Activated B cell treated with CpG ODN at 0.5 μM for 24 hours (primary cell): ENCODE measurements at regions of chr16 and their contacts with region 1.

Region 1: GRCh38 chr16:58129097-58129936 is at the start of gene CFAP20:
- DNase-seq: peak; percentile 90
- ATAC-seq: peak; percentile 91
- H3K4me3 Mint-ChIP-seq: peak within 1 kb of the TSS; percentile 89
- H3K27ac Mint-ChIP-seq: peak within 1 kb of the TSS; percentile 85
- H3K4me1 Mint-ChIP-seq: peaks cover 48% of the 10 kb centered on the region
- H3K27me3 Mint-ChIP-seq: no peaks in the 10 kb centered on the region
- CTCF ChIP-seq: no peak
- total RNA-seq, gene CFAP20: 20.2 and 24.9 TPM in 2 replicates

Region 2: GRCh38 chr16:57984331-57985203 is 144.8 kb before region 1 on chr16:
- CTCF ChIA-PET with region 1: no interaction called
- POLR2A ChIA-PET with region 1: interaction called, 12 read pairs
- intact Hi-C with region 1: loop called (anchors 1 kb)
- DNase-seq: peak; percentile 82
- ATAC-seq: peak; percentile 99
- H3K4me3 Mint-ChIP-seq: peak overlapping the region; percentile 91
- H3K27ac Mint-ChIP-seq: no peak overlapping the region
- H3K4me1 Mint-ChIP-seq: peaks cover 14% of the 10 kb centered on the region
- H3K27me3 Mint-ChIP-seq: peaks cover 4% of the 10 kb centered on the region
- CTCF ChIP-seq: no peak

Region 3: DNA sequence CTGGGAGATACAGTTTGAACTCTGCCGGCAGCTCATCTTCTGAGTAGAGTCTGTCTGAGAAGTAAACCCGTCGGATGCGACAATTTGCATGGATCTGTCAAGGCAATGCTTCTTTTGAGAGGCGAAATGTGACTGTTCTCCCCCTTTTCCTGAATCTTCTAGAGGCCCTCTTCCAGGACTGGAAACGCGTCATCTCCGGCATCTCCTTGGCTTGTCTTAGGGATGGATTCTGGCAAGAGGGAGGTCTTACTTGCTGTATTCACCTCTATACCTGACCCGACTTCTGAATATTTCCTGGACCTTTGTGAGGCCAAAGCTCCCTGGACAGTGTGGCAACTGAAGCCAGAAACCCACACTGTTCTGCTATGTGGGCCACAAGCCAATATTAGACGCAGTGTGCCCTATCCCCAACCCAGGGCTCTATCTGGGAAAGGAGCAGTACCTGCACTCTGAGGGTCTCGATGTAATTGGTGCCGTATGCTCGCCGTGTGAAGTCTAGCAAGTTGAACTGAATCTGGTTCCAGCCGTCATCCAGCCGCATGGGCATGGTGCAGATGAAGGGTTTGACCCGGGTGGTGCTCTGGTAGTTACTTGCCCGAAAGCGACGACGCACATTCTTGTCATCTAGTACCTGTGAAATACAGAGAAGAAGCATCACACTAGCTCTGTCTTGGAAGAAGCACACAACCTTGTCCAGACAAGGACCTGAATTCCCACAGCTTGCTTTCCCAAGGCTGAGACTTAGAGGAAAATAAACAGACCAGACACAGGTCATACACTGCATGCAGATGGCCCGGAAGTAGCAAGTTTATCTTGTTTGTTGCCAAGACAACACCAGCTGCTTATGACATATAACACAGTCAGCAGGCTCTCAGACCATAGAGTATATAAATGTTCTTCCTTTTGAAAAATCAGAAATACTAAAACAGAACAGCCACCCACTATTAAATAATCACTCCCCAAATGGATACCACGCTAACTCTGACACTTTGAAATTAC is 14.2 kb before region 1 on chr16:
- CTCF ChIA-PET with region 1: no interaction called
- POLR2A ChIA-PET with region 1: no interaction called
- intact Hi-C with region 1: no loop called
- DNase-seq: no peak
- ATAC-seq: no peak
- H3K4me3 Mint-ChIP-seq: no peak overlapping the region
- H3K27ac Mint-ChIP-seq: no peak overlapping the region
- H3K4me1 Mint-ChIP-seq: peaks cover 3% of the 10 kb centered on the region
- H3K27me3 Mint-ChIP-seq: no peaks in the 10 kb centered on the region
- CTCF ChIP-seq: no peak

Region 4: DNA sequence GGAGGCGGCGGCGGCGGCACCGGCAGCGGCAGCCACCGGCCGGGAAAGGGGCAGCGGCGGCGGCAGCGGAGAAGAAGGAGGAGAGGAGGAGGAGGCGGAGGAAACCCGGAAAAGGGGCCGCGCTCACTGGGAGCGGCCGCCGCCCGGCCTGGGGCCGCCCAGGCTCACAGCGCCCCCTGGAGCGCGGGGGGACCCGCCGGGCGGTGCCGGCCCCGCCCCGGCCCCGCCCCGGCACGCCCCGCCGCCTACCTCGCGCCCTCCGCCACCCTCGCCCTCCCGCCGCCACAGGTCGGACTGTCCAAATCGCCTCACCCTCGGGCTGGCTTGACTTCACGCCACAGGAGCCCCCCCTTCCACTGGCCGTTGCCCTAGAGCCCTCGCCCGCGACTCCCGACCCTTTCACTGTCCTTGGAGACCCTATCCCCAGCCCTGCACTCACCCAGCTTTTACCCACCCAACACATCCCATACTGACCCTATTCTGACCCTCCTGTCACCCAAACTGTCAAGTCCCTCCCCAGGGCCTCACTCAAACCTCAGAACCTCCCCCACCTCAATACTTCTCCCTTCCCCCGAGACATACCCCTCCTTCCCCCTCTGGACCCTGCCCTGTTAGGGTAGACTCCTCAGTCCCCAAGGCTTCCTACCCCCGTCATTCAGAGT is 68.8 kb after region 1 on chr16 and contains the start of gene CSNK2A2:
- CTCF ChIA-PET with region 1: interaction called, 4 read pairs
- POLR2A ChIA-PET with region 1: no interaction called
- intact Hi-C with region 1: loop called (anchors 1 kb)
- DNase-seq: peak; percentile 73
- ATAC-seq: peak; percentile 94
- H3K4me3 Mint-ChIP-seq: peak within 1 kb of the TSS; percentile 87
- H3K27ac Mint-ChIP-seq: peak within 1 kb of the TSS; percentile 65
- H3K4me1 Mint-ChIP-seq: peaks cover 33% of the 10 kb centered on the region
- H3K27me3 Mint-ChIP-seq: no peaks in the 10 kb centered on the region
- CTCF ChIP-seq: no peak
- total RNA-seq, gene CSNK2A2: 77.3 and 85.5 TPM in 2 replicates

Region 5: GRCh38 chr16:58306327-58306726 is 177.0 kb after region 1 on chr16:
- CTCF ChIA-PET with region 1: interaction called, 3 read pairs
- POLR2A ChIA-PET with region 1: no interaction called
- intact Hi-C with region 1: loop called (anchors 1 kb)
- DNase-seq: peak; percentile 22
- ATAC-seq: no peak
- H3K4me3 Mint-ChIP-seq: no peak overlapping the region
- H3K27ac Mint-ChIP-seq: no peak overlapping the region
- H3K4me1 Mint-ChIP-seq: no peaks in the 10 kb centered on the region
- H3K27me3 Mint-ChIP-seq: peaks cover 5% of the 10 kb centered on the region
- CTCF ChIP-seq: no peak

Region 6: GRCh38 chr16:58515125-58515870 is 386.0 kb after region 1 on chr16 and contains the start of gene SETD6:
- CTCF ChIA-PET with region 1: no interaction called
- POLR2A ChIA-PET with region 1: no interaction called
- intact Hi-C with region 1: loop called (anchors 10 kb)
- DNase-seq: peak; percentile 81
- ATAC-seq: peak; percentile 77
- H3K4me3 Mint-ChIP-seq: peak within 1 kb of the TSS; percentile 91
- H3K27ac Mint-ChIP-seq: peak within 1 kb of the TSS; percentile 84
- H3K4me1 Mint-ChIP-seq: peaks cover 24% of the 10 kb centered on the region
- H3K27me3 Mint-ChIP-seq: no peaks in the 10 kb centered on the region
- CTCF ChIP-seq: no peak
- total RNA-seq, gene SETD6: 25.6 and 31.1 TPM in 2 replicates

Region 7: DNA sequence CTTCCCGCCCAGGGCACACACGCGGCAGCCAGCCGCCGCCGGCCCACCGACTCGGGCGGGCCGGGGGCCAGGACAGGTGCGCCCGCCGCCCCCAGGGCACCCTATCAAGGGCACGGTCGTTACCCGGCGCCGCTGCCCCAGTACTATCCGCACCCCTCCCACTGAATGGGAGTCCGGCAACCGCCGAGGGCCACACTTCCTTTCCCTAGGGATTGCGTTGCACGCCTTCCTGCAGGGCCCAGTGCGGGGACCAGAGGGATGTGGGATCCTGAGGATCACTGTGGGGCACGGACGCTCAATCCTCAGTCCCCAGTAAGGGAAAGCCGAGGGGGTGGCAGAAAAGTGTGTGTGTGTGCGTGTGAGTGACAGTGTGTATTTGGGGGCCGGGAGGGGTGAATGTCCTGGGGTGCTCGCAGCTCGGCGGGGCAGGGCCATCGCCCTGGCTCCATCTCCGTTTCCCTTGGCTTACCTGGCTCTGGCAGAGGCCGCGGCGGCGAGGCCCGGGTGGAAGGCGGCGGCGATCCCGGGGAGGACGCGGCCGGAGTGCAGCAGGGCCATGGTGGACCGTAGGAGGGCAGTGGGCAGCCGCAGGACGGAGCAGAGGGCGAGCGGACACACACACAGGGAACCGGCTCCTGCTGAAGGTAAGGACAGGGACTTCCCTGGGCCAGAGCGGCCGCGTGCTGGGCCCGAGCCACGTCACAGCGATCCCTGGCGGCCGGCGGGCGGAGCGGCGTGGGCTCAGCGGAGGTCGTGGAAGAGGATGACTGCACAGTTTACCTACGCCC is 604.5 kb after region 1 on chr16 and contains the start of gene GOT2:
- CTCF ChIA-PET with region 1: no interaction called
- POLR2A ChIA-PET with region 1: interaction called, 3 read pairs
- intact Hi-C with region 1: loop called (anchors 1 kb)
- DNase-seq: peak; percentile 77
- ATAC-seq: peak; percentile 95
- H3K4me3 Mint-ChIP-seq: peak within 1 kb of the TSS; percentile 98
- H3K27ac Mint-ChIP-seq: peak within 1 kb of the TSS; percentile 62
- H3K4me1 Mint-ChIP-seq: peaks cover 36% of the 10 kb centered on the region
- H3K27me3 Mint-ChIP-seq: no peaks in the 10 kb centered on the region
- CTCF ChIP-seq: no peak
- total RNA-seq, gene GOT2: 53.6 and 59.2 TPM in 2 replicates